Caco-2 (cell line): ENCODE measurements at regions of chr10 and their contacts with region 1.

Region 1: GRCh38 chr10:18214691-18215563 is 74.7 kb downstream of the CACNB2 start:
- DNase-seq: peak; percentile 46 to 65
- H3K4me3 ChIP-seq: no peak overlapping the region
- H3K4me3 Mint-ChIP-seq: no peak overlapping the region
- H3K27ac Mint-ChIP-seq: no peak overlapping the region
- H3K4me1 ChIP-seq: peaks cover 11% of the 10 kb centered on the region
- H3K4me1 Mint-ChIP-seq: peaks cover 7% of the 10 kb centered on the region
- H3K27me3 ChIP-seq: no peaks in the 10 kb centered on the region
- H3K27me3 Mint-ChIP-seq: peaks cover under 1% of the 10 kb centered on the region
- CTCF ChIP-seq: peak; percentile 81 to 91

Region 2: DNA sequence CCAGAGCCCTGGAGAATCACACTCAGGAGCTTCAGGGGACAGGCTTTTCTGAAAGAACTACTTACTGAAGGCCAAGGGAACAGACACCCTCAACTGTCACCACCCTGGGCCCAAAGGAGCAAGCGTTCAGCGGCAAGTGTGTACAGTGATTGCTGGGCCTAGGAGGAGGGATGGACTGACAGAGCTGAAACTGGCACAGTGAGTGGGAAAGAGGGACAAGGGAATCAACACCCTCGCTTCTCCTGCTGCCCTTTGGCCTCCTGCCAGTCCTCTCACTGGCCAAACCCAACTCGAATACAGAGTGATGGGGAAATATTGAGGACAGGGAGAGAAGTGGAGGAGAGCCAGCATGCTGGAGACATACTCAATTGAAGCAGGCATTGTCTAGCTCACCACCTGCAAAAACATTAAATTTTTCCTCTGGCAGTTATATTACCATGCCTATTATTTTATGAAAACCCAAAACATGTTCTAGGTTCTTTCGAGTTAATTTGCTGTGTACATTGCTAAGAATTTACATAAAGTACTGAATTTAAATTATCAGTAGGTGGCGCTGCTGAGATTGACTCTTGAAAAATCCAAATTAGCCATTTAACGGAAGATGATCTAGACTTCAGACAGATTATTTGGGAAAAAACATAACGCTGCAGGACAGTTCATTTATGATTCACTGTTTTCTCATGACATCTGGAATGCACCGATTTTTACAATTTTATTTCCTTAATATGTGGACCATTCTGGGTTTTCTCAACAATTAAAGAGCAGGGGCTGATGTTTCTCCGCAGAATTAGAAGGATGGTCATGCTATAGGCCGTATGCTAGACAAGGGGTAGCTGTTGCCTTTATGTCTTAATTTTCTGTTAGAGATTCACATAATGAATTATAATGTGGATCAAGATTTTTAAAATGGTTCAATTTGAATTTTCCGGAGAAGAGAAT is 477.6 kb before region 1 on chr10:
- CTCF ChIA-PET with region 1: no interaction called
- POLR2A ChIA-PET with region 1: no interaction called
- intact Hi-C with region 1: loop called (anchors 5 kb)
- DNase-seq: peak in 1 of 2 experiments; percentile 37
- H3K4me3 ChIP-seq: no peak overlapping the region
- H3K4me3 Mint-ChIP-seq: no peak overlapping the region
- H3K27ac Mint-ChIP-seq: no peak overlapping the region
- H3K4me1 ChIP-seq: no peaks in the 10 kb centered on the region
- H3K4me1 Mint-ChIP-seq: peaks cover 5% of the 10 kb centered on the region
- H3K27me3 ChIP-seq: no peaks in the 10 kb centered on the region
- H3K27me3 Mint-ChIP-seq: no peaks in the 10 kb centered on the region
- CTCF ChIP-seq: peak; percentile 64 to 78

Region 3: GRCh38 chr10:17910125-17910789 is 304.7 kb before region 1 on chr10:
- CTCF ChIA-PET with region 1: no interaction called
- POLR2A ChIA-PET with region 1: no interaction called
- intact Hi-C with region 1: loop called (anchors 1 kb)
- DNase-seq: peak; percentile 51 to 63
- H3K4me3 ChIP-seq: no peak overlapping the region
- H3K4me3 Mint-ChIP-seq: no peak overlapping the region
- H3K27ac Mint-ChIP-seq: no peak overlapping the region
- H3K4me1 ChIP-seq: no peaks in the 10 kb centered on the region
- H3K4me1 Mint-ChIP-seq: no peaks in the 10 kb centered on the region
- H3K27me3 ChIP-seq: no peaks in the 10 kb centered on the region
- H3K27me3 Mint-ChIP-seq: peaks cover 18% of the 10 kb centered on the region
- CTCF ChIP-seq: peak; percentile 84

Region 4: DNA sequence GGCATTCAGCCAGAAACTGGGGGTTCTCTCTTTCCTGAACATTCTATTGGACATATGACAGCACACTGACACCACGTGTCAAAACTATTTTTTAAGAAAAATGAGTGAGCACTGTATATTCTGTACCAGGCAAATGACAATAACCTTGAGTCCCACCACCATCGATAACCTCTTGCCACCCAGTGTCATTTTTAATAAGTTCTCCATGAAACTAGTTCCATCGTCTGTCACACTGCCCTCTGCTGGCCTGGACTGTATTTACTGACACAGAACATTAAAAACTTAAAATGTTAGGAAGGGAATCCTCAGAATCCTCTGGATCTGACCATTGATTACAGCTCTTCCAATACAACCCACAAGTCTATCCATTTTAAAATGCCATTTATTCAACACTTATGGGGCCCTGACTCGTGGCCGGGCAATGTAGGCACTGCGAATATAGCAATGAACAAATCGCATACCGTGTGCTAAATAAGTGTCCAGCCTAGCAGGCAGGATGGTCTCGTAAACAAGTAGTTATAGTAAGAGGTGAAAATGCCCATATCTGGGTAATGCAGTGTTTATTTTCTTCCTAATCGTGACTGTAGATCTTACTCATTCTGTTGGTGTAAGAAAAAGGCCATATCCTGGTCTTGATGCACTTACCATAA is 110.6 kb before region 1 on chr10:
- CTCF ChIA-PET with region 1: no interaction called
- POLR2A ChIA-PET with region 1: no interaction called
- intact Hi-C with region 1: loop called (anchors 2 kb)
- DNase-seq: peak; percentile 49 to 65
- H3K4me3 ChIP-seq: no peak overlapping the region
- H3K4me3 Mint-ChIP-seq: no peak overlapping the region
- H3K27ac Mint-ChIP-seq: no peak overlapping the region
- H3K4me1 ChIP-seq: no peaks in the 10 kb centered on the region
- H3K4me1 Mint-ChIP-seq: no peaks in the 10 kb centered on the region
- H3K27me3 ChIP-seq: no peaks in the 10 kb centered on the region
- H3K27me3 Mint-ChIP-seq: peaks cover 14% of the 10 kb centered on the region
- CTCF ChIP-seq: peak; percentile 86 to 90

Region 5: GRCh38 chr10:18312374-18313139 is 97.6 kb after region 1 on chr10:
- CTCF ChIA-PET with region 1: no interaction called
- POLR2A ChIA-PET with region 1: no interaction called
- intact Hi-C with region 1: loop called (anchors 1 kb)
- DNase-seq: peak in 1 of 2 experiments; percentile 29
- H3K4me3 ChIP-seq: no peak overlapping the region
- H3K4me3 Mint-ChIP-seq: no peak overlapping the region
- H3K27ac Mint-ChIP-seq: no peak overlapping the region
- H3K4me1 ChIP-seq: no peaks in the 10 kb centered on the region
- H3K4me1 Mint-ChIP-seq: no peaks in the 10 kb centered on the region
- H3K27me3 ChIP-seq: peaks cover 2% of the 10 kb centered on the region
- H3K27me3 Mint-ChIP-seq: peaks cover 15% of the 10 kb centered on the region
- CTCF ChIP-seq: peak; percentile 46 to 71